ENCODE measurements at regions of chr20 and their contacts with region 1.

Region 1: GRCh38 chr20:3677733-3678132 is 4.1 kb downstream of the ADAM33 start:
- DNase-seq: no peak

Region 2: GRCh38 chr20:3323398-3323797 is 354.3 kb before region 1 on chr20:
- CTCF ChIA-PET with region 1: no interaction called
- POLR2A ChIA-PET with region 1: no interaction called
- DNase-seq: no peak

Region 3: GRCh38 chr20:3667434-3668037 is 10.2 kb before region 1 on chr20:
- CTCF ChIA-PET with region 1: interaction called, 10 read pairs
- POLR2A ChIA-PET with region 1: no interaction called
- DNase-seq: no peak

Region 4: GRCh38 chr20:3710703-3711483 is 33.2 kb after region 1 on chr20:
- CTCF ChIA-PET with region 1: interaction called, 28 read pairs
- POLR2A ChIA-PET with region 1: interaction called, 3 read pairs
- DNase-seq: peak; percentile 87